Dendritic cell treated with granulocyte-macrophage colony-stimulating factor and Interleukin-4, amounts not matched to agents 40 ng/mL and 50 ng/mL, for 4 days (primary cell): ENCODE measurements at regions of chr2 and their contacts with region 1.

Region 1: GRCh38 chr2:148644883-148645538 is 460 bp downstream of the EPC2 start:
- H3K4me3 Mint-ChIP-seq: peak overlapping the region; percentile 83
- H3K27ac Mint-ChIP-seq: peak overlapping the region; percentile 98
- H3K4me1 Mint-ChIP-seq: peaks cover 25% of the 10 kb centered on the region
- H3K27me3 Mint-ChIP-seq: no peaks in the 10 kb centered on the region

Region 2: DNA sequence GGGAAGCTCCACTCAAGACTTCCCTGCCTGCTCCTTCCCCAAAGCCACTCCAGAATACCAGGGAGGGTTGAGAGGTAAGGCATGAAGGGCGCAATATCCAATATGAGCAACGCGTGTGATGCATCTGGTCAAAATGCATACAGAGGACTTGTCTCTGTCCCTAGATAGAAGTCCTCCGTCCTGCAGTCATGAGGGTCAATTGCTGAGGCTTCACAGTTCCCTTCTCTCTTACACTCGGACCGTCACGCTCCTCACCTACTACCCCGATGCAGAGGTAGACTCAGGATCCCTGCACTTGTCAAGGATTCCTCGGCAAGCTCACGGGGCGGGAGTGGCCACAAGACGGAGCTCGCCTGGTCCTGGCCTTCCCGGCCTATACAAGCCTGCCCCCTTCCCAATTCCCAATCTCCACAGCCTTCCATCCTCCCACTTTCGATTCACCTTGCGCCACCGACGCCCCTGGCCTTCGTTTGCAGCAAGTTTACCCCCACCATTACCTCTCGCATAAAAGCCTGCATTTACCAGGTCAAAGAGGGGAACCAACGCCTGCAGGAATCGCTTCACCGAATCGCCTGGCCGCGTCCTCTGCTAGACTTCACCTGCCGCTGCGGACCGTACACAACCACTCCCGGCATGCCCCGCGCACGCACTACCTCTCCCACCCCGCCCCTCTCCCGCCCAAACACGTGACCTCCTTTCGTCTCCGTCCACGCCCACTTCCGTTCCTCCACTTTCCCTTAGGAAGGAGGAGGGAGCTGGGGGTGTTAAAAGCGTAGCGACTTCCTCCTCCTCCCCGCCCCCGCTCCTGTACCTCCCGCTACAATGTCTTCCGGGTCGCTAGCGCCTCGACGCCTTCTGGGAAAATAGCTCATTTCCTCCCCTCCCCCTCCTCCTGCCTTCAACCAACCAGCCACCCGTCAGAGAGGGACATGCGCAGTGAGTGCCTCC is 624.6 kb before region 1 on chr2 and contains the start of gene ORC4:
- intact Hi-C with region 1: loop called (anchors 1 kb)
- H3K4me3 Mint-ChIP-seq: peak within 1 kb of the TSS; percentile 99
- H3K27ac Mint-ChIP-seq: peak within 1 kb of the TSS; percentile 100
- H3K4me1 Mint-ChIP-seq: peaks cover 54% of the 10 kb centered on the region
- H3K27me3 Mint-ChIP-seq: no peaks in the 10 kb centered on the region

Region 3: GRCh38 chr2:148459377-148459778 is 185.6 kb before region 1 on chr2:
- intact Hi-C with region 1: no loop called
- H3K4me3 Mint-ChIP-seq: no peak overlapping the region
- H3K27ac Mint-ChIP-seq: no peak overlapping the region
- H3K4me1 Mint-ChIP-seq: no peaks in the 10 kb centered on the region
- H3K27me3 Mint-ChIP-seq: no peaks in the 10 kb centered on the region

Region 4: DNA sequence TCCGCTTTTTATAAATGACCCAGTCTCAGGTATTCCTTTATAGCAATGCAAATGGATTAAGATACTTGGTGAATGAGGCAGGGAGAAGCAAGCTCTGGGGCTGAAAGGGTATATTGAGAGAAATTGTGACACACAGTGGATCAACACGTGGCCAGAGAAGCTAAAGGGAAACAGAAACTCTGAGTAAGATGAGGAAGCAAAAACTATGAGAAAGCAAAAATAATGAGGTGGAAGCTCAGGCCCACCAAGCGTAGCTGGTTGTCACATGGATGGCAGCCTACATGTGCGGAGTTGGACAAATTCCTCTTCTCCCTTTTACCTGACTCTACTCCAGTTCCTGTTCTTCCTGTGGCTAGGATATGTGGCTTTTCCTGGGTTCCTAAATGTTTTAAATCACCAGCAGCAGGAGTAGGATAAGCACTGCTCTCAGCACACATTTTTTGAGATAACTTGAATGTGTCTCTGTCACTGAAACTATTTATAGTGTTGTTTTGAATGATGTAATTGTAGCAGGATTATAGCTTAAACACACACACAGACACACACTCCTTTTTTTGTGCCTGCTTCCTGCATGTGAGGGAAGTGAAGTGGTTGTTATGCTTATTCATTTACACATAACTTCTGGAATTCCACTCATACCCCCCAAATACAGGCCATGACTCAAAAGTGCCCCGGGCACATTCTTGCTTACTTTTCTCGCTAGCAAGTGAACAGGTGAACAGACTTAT is 30.5 kb before region 1 on chr2:
- intact Hi-C with region 1: loop called (anchors 2 kb)
- H3K4me3 Mint-ChIP-seq: peak overlapping the region; percentile 4
- H3K27ac Mint-ChIP-seq: peak overlapping the region; percentile 89
- H3K4me1 Mint-ChIP-seq: peaks cover 43% of the 10 kb centered on the region
- H3K27me3 Mint-ChIP-seq: no peaks in the 10 kb centered on the region

Region 5: GRCh38 chr2:148658807-148659722 is 14.1 kb after region 1 on chr2:
- intact Hi-C with region 1: loop called (anchors 1 kb)
- H3K4me3 Mint-ChIP-seq: peak overlapping the region; percentile 63
- H3K27ac Mint-ChIP-seq: peak overlapping the region; percentile 88
- H3K4me1 Mint-ChIP-seq: peaks cover 57% of the 10 kb centered on the region
- H3K27me3 Mint-ChIP-seq: no peaks in the 10 kb centered on the region